ENCODE measurements at regions of chr12 and their contacts with region 1.

Region 1: GRCh38 chr12:3803865-3804472 is 51.1 kb upstream of the CRACR2A start:
- DNase-seq: peak; percentile 75
- ATAC-seq: peak; percentile 68
- H3K4me3 ChIP-seq: no peak overlapping the region
- H3K4me3 Mint-ChIP-seq: no peak overlapping the region
- H3K27ac ChIP-seq: no peak overlapping the region
- H3K27ac Mint-ChIP-seq: no peak overlapping the region
- H3K4me1 ChIP-seq: no peaks in the 10 kb centered on the region
- H3K4me1 Mint-ChIP-seq: no peaks in the 10 kb centered on the region
- H3K27me3 ChIP-seq: no peaks in the 10 kb centered on the region
- H3K27me3 Mint-ChIP-seq: no peaks in the 10 kb centered on the region
- CTCF ChIP-seq: peak; percentile 90

Region 2: GRCh38 chr12:3135522-3136461 is 668.2 kb before region 1 on chr12:
- CTCF ChIA-PET with region 1: interaction called, 13 read pairs
- POLR2A ChIA-PET with region 1: no interaction called
- intact Hi-C with region 1: no loop called
- DNase-seq: peak; percentile 75
- ATAC-seq: peak; percentile 75
- H3K4me3 ChIP-seq: no peak overlapping the region
- H3K4me3 Mint-ChIP-seq: no peak overlapping the region
- H3K27ac ChIP-seq: no peak overlapping the region
- H3K27ac Mint-ChIP-seq: no peak overlapping the region
- H3K4me1 ChIP-seq: no peaks in the 10 kb centered on the region
- H3K4me1 Mint-ChIP-seq: no peaks in the 10 kb centered on the region
- H3K27me3 ChIP-seq: peaks cover 0 to 15% (median 2%) of the 10 kb centered on the region in 4 experiments
- H3K27me3 Mint-ChIP-seq: peaks cover 45% of the 10 kb centered on the region
- CTCF ChIP-seq: peak; percentile 83

Region 3: GRCh38 chr12:3313675-3314663 is 490.0 kb before region 1 on chr12:
- CTCF ChIA-PET with region 1: interaction called, 10 read pairs
- POLR2A ChIA-PET with region 1: no interaction called
- intact Hi-C with region 1: no loop called
- DNase-seq: peak; percentile 47
- ATAC-seq: peak; percentile 43
- H3K4me3 ChIP-seq: no peak overlapping the region
- H3K4me3 Mint-ChIP-seq: no peak overlapping the region
- H3K27ac ChIP-seq: no peak overlapping the region
- H3K27ac Mint-ChIP-seq: no peak overlapping the region
- H3K4me1 ChIP-seq: no peaks in the 10 kb centered on the region
- H3K4me1 Mint-ChIP-seq: no peaks in the 10 kb centered on the region
- H3K27me3 ChIP-seq: peaks cover 0 to 3% (median 0%) of the 10 kb centered on the region in 4 experiments
- H3K27me3 Mint-ChIP-seq: peaks cover 24% of the 10 kb centered on the region
- CTCF ChIP-seq: peak; percentile 19

Region 4: DNA sequence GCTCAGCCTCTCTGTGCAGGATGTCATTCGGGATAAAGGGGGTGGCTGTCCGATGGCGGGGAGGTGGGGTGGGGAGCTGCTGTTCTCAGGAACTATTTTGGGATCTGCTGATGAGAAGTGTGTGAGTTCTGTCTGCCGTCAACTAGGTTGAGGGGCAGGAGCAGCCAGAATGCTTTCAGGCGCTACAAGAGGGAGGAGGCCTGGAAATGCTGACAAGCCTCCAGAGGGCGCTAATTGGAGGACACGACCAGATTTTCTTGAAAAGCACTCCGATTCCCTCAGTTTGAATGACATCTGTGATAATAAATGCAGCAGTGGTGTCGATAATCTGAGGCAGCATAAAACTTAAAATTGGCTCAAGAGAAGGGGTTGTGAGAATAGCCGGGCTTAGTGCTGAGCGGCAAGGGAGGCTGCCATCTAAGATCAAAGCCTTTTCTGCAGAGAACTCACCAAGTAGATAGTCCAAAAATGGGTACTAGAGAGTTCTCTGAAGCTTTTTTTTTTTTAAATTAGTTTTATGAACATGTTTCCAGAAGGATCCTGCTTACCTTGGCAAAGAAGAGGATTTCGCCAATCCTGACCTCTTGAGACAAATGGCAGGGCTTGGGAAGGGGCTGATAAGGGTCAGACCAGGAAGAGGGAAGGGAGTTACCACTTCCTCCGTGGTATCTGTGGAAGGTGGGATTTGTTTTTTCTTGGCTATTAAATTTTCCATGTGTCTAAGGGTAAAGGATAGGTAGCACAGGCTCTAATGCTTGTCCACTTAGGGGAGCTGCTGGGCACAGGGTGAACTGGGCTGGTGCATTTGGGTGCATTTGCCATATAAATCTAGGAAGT is 145.4 kb before region 1 on chr12:
- CTCF ChIA-PET with region 1: interaction called, 14 read pairs
- POLR2A ChIA-PET with region 1: no interaction called
- intact Hi-C with region 1: no loop called
- DNase-seq: peak; percentile 25
- ATAC-seq: no peak
- H3K4me3 ChIP-seq: no peak overlapping the region
- H3K4me3 Mint-ChIP-seq: no peak overlapping the region
- H3K27ac ChIP-seq: no peak overlapping the region
- H3K27ac Mint-ChIP-seq: no peak overlapping the region
- H3K4me1 ChIP-seq: no peaks in the 10 kb centered on the region
- H3K4me1 Mint-ChIP-seq: no peaks in the 10 kb centered on the region
- H3K27me3 ChIP-seq: no peaks in the 10 kb centered on the region
- H3K27me3 Mint-ChIP-seq: no peaks in the 10 kb centered on the region
- CTCF ChIP-seq: peak; percentile 17

Region 5: DNA sequence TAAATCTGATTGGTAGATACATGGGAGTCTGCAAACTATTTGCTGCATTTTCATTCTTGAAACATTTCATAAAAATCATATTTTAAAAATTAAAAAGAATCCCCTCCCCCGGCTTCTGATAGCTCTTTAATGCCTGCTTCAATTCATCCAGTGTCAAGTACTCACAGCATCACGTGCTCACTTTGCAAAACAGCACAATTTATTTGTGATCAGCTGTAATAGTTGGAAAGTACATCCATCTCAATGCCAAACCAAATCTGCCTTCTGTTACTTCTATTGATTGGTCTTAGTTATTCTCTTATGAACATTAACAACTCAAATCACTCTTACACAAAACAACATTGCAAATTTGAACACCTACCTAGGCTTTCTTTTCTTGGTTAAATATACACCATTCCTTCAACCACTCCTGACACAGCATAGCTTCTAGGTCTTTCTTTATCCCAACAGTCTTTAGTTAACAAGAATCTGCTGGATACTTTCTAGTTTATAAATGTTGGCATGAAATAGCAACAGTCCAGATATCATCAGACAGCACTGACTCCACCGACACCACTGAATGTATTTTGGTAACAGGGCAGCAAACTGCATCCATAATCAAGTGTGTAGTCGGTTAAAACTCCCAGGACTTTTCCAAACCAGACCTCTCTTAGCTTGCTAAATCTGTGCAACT is 11.3 kb after region 1 on chr12:
- CTCF ChIA-PET with region 1: interaction called, 11 read pairs
- POLR2A ChIA-PET with region 1: no interaction called
- intact Hi-C with region 1: no loop called
- DNase-seq: no peak
- ATAC-seq: no peak
- H3K4me3 ChIP-seq: no peak overlapping the region
- H3K4me3 Mint-ChIP-seq: no peak overlapping the region
- H3K27ac ChIP-seq: no peak overlapping the region
- H3K27ac Mint-ChIP-seq: no peak overlapping the region
- H3K4me1 ChIP-seq: no peaks in the 10 kb centered on the region
- H3K4me1 Mint-ChIP-seq: peaks cover 8% of the 10 kb centered on the region
- H3K27me3 ChIP-seq: no peaks in the 10 kb centered on the region
- H3K27me3 Mint-ChIP-seq: no peaks in the 10 kb centered on the region
- CTCF ChIP-seq: no peak

Measured in B cell (primary cell).